ENCODE measurements at regions of chr11 and their contacts with region 1.

Region 1: DNA sequence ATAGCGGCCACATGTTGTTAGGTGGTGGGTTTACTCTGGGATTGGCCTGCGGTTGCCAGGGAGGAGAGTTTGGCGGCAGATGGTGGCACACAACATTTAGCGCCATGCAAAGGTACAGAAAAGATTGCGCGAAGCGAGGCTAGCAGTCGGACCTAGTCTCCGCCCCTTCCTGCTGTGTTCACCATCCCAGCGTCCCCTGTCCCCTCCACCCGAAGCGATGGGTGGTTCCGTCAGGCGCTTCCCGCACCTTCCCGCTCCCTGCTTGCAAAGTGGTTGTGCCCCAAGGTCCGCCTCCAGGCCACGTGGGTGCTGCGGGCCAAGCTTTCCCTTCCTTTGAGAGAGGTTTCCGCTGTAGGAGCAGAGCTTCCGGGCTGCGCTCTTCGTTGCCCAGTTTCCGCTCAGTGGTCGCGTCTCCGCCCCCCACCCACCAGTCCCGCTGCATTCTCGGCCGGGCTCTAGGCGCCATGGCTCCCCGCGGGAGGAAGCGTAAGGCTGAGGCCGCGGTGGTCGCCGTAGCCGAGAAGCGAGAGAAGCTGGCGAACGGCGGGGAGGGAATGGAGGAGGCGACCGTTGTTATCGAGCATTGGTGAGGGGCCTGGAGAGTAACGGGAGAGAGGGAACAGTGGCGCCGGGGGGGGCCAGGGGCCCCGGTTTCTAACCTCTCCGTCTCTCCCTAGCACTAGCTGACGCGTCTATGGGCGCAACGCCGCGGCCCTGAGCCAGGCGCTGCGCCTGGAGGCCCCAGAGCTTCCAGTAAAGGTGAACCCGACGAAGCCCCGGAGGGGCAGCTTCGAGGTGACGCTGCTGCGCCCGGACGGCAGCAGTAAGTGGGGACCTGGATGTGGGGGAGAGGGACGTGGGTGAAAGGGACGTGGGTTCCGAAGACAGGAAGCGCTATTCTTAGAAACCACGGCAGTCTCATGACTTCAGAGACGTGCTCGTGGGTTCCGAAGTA is at the start of gene SELENOH:
- DNase-seq: peak; percentile 92
- ATAC-seq: peak; percentile 90
- H3K4me3 Mint-ChIP-seq: peak within 1 kb of the TSS; percentile 100
- H3K27ac Mint-ChIP-seq: peak within 1 kb of the TSS; percentile 100
- H3K4me1 Mint-ChIP-seq: peaks cover 31% of the 10 kb centered on the region
- H3K27me3 Mint-ChIP-seq: no peaks in the 10 kb centered on the region
- total RNA-seq, gene SELENOH: 176 to 178 TPM

Region 2: GRCh38 chr11:57667736-57668435 is 73.5 kb before region 1 on chr11 and contains the start of gene ZDHHC5:
- POLR2A ChIA-PET with region 1: interaction called, 15 read pairs
- DNase-seq: peak; percentile 99
- ATAC-seq: peak; percentile 90
- H3K4me3 Mint-ChIP-seq: peak within 1 kb of the TSS; percentile 98
- H3K27ac Mint-ChIP-seq: peak within 1 kb of the TSS; percentile 96
- H3K4me1 Mint-ChIP-seq: peaks cover 35% of the 10 kb centered on the region
- H3K27me3 Mint-ChIP-seq: no peaks in the 10 kb centered on the region
- total RNA-seq, gene ZDHHC5: 76.3 to 78.4 TPM

Region 3: GRCh38 chr11:57712256-57713150 is 28.9 kb before region 1 on chr11 and contains the start of gene TMX2:
- POLR2A ChIA-PET with region 1: interaction called, 17 read pairs
- DNase-seq: peak; percentile 86
- ATAC-seq: peak; percentile 96
- H3K4me3 Mint-ChIP-seq: peak within 1 kb of the TSS; percentile 97
- H3K27ac Mint-ChIP-seq: peak within 1 kb of the TSS; percentile 93
- H3K4me1 Mint-ChIP-seq: peaks cover 36% of the 10 kb centered on the region
- H3K27me3 Mint-ChIP-seq: no peaks in the 10 kb centered on the region
- total RNA-seq, gene TMX2: 61.6 to 64.7 TPM

Region 4: GRCh38 chr11:57751676-57752253 is 10.4 kb after region 1 on chr11 and contains the start of gene BTBD18:
- POLR2A ChIA-PET with region 1: interaction called, 13 read pairs
- DNase-seq: no peak
- ATAC-seq: peak; percentile 47
- H3K4me3 Mint-ChIP-seq: no peak within 1 kb of the TSS
- H3K27ac Mint-ChIP-seq: peak within 1 kb of the TSS; percentile 65
- H3K4me1 Mint-ChIP-seq: peaks cover 8% of the 10 kb centered on the region
- H3K27me3 Mint-ChIP-seq: no peaks in the 10 kb centered on the region
- total RNA-seq, gene BTBD18: not detected

Region 5: DNA sequence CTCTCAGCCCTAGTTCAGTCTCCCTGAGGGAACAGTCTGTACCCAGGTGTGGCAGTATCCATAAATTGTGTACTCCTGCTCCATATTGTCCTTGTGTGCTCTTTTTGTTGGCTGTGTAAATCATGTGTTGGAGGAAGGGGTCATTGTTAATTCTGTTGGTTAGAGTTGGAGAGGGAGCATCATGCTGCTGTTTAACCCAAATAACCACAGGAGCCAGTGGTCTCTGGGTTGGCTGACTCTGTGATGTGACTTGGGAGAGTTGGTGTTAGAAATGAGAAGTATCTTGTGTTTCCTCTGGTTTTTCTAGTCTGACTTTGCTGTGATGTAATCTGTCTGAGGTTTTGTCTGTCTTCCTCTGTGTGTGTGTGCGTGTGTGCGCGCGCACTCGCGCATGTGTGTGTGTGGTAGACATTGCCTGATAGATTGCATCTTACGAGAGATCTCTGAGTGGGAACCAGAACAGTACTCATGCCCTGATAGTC is 50.7 kb after region 1 on chr11:
- POLR2A ChIA-PET with region 1: interaction called, 18 read pairs
- DNase-seq: peak; percentile 83
- ATAC-seq: peak; percentile 95
- H3K4me3 Mint-ChIP-seq: peak overlapping the region; percentile 79
- H3K27ac Mint-ChIP-seq: peak overlapping the region; percentile 92
- H3K4me1 Mint-ChIP-seq: peaks cover 54% of the 10 kb centered on the region
- H3K27me3 Mint-ChIP-seq: no peaks in the 10 kb centered on the region

Region 6: DNA sequence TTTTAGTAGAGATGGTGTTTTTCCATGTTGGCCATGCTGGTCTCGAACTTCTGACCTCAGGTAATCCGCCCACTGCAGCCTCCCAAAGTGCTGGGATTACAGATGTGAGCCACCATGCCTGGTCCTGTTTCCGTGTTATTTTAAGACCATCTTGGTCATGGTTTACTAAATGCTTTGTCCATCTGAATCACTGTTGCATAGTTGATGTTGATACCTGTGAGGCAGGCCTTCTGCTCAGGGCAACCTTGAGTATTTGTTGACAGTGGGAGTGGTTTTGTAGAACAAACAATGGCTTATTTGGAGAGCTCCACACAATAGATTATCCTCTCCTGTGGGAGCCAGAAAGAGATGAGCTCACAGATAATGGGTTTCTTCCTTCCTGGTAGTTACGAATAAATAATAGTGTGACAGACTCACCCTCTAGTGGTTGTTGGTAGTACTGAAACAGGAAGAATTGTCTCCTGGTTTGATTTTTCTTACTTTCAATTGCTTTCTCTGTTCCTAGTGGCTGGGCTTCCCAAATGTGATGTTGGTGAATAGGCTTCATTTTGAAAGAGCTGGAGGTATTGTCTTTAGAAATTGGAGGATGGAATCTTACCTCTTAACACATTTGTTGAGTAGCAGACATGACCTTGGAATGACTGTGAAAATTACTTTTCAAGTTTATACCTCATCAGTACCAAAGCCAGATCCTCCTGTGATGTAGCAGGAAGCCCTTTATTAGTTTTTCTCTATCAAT is 59.2 kb after region 1 on chr11:
- POLR2A ChIA-PET with region 1: interaction called, 36 read pairs
- DNase-seq: no peak
- ATAC-seq: peak; percentile 81
- H3K4me3 Mint-ChIP-seq: peak overlapping the region; percentile 55
- H3K27ac Mint-ChIP-seq: peak overlapping the region; percentile 79
- H3K4me1 Mint-ChIP-seq: peaks cover 25% of the 10 kb centered on the region
- H3K27me3 Mint-ChIP-seq: no peaks in the 10 kb centered on the region

Measured in activated naive CD8-positive, alpha-beta T cell treated with anti-CD3 and anti-CD28 coated beads, Interleukin-2, amount 10 ng/mL, durations not matched to agents 7 days and 5 days (primary cell).